ENCODE measurements at regions of chr2 and their contacts with region 1.

Region 1: DNA sequence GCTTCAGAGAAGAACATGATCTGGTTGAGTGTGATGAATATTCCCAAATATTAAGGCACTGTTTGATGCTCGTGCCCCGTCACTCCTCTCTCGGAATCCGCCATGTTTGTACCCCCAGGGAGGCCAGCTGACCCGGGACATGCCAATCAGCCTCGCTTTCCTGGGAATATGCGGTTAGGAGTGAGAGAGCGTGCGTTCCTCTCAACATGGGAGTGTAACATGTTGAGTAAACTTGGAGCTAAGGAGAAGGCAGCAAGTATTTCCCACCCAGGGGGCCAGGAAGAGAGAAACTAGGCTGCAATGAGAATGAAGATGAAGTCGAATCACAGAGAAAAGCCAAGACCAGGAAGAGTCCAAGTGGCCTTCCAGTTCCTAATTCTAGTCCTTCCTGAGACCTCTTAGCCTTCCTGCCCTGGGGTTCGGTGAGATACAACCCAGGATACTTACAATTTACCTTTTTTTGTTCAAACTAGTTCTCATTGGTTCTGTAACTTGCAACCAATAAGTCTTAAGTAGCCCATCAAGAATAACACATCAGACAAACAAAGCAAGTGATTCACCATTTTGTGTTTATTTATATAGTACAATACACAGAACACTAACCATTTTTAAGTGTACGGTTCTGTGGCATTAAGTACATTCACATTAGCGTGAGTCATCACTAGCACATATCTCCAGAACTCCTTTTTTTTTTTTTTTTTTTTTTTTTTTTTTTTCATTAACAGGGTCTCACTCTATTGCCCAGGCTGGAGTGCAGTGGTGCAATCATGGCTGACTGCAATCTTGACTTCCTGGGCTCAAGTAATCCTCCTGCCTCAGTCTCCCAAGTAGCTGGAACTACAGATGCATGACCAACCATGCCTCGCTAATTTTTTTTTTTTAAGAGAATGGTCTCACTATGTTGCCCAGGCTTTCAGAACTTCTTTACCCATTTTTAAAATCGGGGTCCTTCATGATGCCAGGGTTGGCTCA is 36.4 kb upstream of the SLC1A4 start:
- DNase-seq: no peak
- CTCF ChIP-seq: no peak

Region 2: GRCh38 chr2:64586883-64587481 is 365.8 kb before region 1 on chr2:
- CTCF ChIA-PET with region 1: no interaction called
- POLR2A ChIA-PET with region 1: no interaction called
- DNase-seq: peak; percentile 37
- CTCF ChIP-seq: peak; percentile 55

Region 3: DNA sequence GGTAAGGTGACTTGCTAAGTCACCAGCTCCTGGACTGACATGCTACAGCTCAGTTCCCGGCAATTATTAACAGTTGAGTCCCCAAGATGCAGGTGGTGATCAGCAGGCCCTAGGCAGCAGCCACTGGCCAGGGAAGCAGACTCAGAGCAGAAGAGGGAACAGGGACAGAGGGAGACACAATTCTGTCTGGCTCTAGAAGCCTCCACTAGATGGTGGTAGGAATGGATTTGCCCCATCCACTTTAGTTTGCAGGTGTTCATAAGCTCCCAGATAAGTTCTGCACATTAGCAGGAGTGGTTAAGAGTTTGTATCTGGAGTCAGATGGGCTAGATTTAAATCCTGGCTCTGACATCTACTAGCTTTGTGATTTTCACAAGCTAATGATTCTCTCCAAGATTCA is 10.9 kb after region 1 on chr2:
- CTCF ChIA-PET with region 1: interaction called, 12 read pairs
- POLR2A ChIA-PET with region 1: no interaction called
- DNase-seq: no peak
- CTCF ChIP-seq: no peak